IMR-90 (cell line): ENCODE measurements at regions of chr4 and their contacts with region 1.

Region 1: GRCh38 chr4:182143822-182144625 is 99.2 kb upstream of the TENM3 start:
- DNase-seq: peak; percentile 83
- ATAC-seq: peak; percentile 75
- H3K4me3 ChIP-seq: peak overlapping the region; percentile 88
- H3K27ac ChIP-seq: peak overlapping the region; percentile 70
- H3K4me1 ChIP-seq: peaks cover 2% of the 10 kb centered on the region; the same call in 1 of the 2 replicates
- H3K27me3 ChIP-seq: no peaks in the 10 kb centered on the region
- CTCF ChIP-seq: no peak
- POLR2A ChIP-seq: peak; percentile 74
- RAD21 ChIP-seq: no peak; the same call in 1 of the 2 replicates

Region 2: GRCh38 chr4:181685911-181686310 is 458.1 kb before region 1 on chr4:
- CTCF ChIA-PET with region 1: no interaction called
- POLR2A ChIA-PET with region 1: no interaction called
- dilution Hi-C with region 1: no loop called
- in situ Hi-C with region 1: no loop called
- intact Hi-C with region 1: loop called (anchors 10 kb)
- DNase-seq: peak; percentile 97
- ATAC-seq: peak; percentile 85
- H3K4me3 ChIP-seq: peak overlapping the region; percentile 8; the same call in 1 of the 2 replicates
- H3K27ac ChIP-seq: no peak overlapping the region
- H3K4me1 ChIP-seq: peaks cover 11% of the 10 kb centered on the region
- H3K27me3 ChIP-seq: no peaks in the 10 kb centered on the region
- CTCF ChIP-seq: no peak
- POLR2A ChIP-seq: peak; percentile 33; the same call in 1 of the 2 replicates
- RAD21 ChIP-seq: no peak

Region 3: GRCh38 chr4:181952478-181952877 is 191.5 kb before region 1 on chr4:
- CTCF ChIA-PET with region 1: no interaction called
- POLR2A ChIA-PET with region 1: no interaction called
- dilution Hi-C with region 1: no loop called
- in situ Hi-C with region 1: no loop called
- intact Hi-C with region 1: loop called (anchors 5 kb)
- DNase-seq: peak; percentile 96
- ATAC-seq: peak; percentile 85
- H3K4me3 ChIP-seq: no peak overlapping the region
- H3K27ac ChIP-seq: peak overlapping the region; percentile 39
- H3K4me1 ChIP-seq: peaks cover 6% of the 10 kb centered on the region
- H3K27me3 ChIP-seq: no peaks in the 10 kb centered on the region
- CTCF ChIP-seq: no peak
- POLR2A ChIP-seq: no peak
- RAD21 ChIP-seq: no peak

Region 4: DNA sequence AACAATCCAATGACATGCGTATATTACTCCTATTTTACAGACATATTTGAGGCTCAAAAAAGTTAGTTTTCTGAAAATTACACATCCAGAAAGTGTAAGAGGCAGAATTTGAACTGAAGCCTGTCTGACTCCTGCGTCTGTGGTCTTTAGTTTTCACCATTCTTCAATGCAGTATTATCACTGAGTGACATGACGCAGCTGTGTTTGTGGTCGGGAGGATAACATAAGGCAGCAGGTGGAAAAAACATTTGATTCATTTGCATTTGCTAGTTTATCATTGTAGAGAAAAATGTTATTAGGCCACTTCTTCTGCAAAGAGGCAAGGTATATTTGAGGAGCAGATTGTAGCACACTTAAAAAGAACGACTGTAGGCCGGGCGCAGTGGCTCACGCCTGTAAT is 285.9 kb after region 1 on chr4:
- CTCF ChIA-PET with region 1: no interaction called
- POLR2A ChIA-PET with region 1: no interaction called
- dilution Hi-C with region 1: no loop called
- in situ Hi-C with region 1: loop called (anchors 10 kb)
- intact Hi-C with region 1: no loop called
- DNase-seq: no peak
- ATAC-seq: no peak
- H3K4me3 ChIP-seq: no peak overlapping the region
- H3K27ac ChIP-seq: no peak overlapping the region
- H3K4me1 ChIP-seq: peaks cover 2% of the 10 kb centered on the region; the same call in 1 of the 2 replicates
- H3K27me3 ChIP-seq: no peaks in the 10 kb centered on the region
- CTCF ChIP-seq: no peak
- POLR2A ChIP-seq: no peak
- RAD21 ChIP-seq: no peak

Region 5: DNA sequence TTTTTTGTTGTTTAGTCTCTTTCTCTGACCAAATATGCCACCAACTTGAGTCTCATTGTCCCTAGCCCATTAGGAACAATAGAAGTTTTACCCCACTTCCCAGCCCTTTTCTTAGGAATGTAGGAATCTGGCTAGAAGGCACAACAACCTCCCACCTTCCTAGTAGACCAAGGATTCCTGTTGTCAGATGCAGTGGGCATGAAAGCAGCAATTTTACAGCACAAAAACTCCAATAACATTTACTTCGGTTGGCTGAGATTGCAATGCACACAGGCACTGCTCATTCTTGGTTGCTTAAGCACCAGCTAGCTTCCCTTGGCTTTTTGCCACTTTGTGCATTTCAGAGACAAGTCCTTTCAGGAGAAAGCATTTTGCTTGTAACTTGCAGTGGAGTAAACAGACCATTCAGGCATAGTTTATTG is 412.0 kb after region 1 on chr4:
- CTCF ChIA-PET with region 1: no interaction called
- POLR2A ChIA-PET with region 1: no interaction called
- dilution Hi-C with region 1: no loop called
- in situ Hi-C with region 1: no loop called
- intact Hi-C with region 1: loop called (anchors 10 kb)
- DNase-seq: peak; percentile 91
- ATAC-seq: peak; percentile 72
- H3K4me3 ChIP-seq: no peak overlapping the region
- H3K27ac ChIP-seq: peak overlapping the region; percentile 51; the same call in 1 of the 2 replicates
- H3K4me1 ChIP-seq: peaks cover 11% of the 10 kb centered on the region
- H3K27me3 ChIP-seq: no peaks in the 10 kb centered on the region
- CTCF ChIP-seq: no peak
- POLR2A ChIP-seq: no peak
- RAD21 ChIP-seq: no peak

Region 6: GRCh38 chr4:182925298-182925738 is 781.3 kb after region 1 on chr4:
- CTCF ChIA-PET with region 1: interaction called, 3 read pairs
- POLR2A ChIA-PET with region 1: no interaction called
- dilution Hi-C with region 1: no loop called
- in situ Hi-C with region 1: no loop called
- intact Hi-C with region 1: loop called (anchors 5 kb)
- DNase-seq: peak; percentile 84
- ATAC-seq: peak; percentile 32
- H3K4me3 ChIP-seq: no peak overlapping the region
- H3K27ac ChIP-seq: no peak overlapping the region
- H3K4me1 ChIP-seq: peaks cover 17% of the 10 kb centered on the region
- H3K27me3 ChIP-seq: no peaks in the 10 kb centered on the region
- CTCF ChIP-seq: peak; percentile 67
- POLR2A ChIP-seq: no peak
- RAD21 ChIP-seq: peak; percentile 67